ENCODE measurements at regions of chr2 and their contacts with region 1.

Region 1: DNA sequence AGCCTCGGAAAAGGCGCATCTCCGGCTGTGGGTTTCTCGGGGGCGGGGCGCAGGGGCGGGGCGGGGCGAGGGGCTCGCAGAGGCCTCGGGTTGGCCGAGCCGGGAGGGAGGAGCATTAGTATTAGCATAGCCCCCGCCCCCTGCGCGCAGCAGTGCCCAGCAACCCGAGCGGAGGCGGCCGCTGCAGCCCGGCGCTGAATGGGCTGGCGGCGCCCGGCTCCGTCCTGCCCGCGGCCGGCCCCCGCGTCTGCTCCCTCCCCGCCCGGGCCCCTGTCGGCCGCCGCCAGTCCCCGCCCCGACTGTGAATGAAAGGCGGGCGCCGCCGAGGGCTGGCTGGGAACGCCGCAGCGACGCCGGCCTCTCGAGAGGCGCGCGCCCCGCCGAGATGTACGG is at the start of gene EFR3B:
- DNase-seq: peak; percentile 92 to 97 (median 96)
- H3K4me3 ChIP-seq: peak within 1 kb of the TSS; percentile 70 to 98 (median 87)
- H3K27ac ChIP-seq: peak within 1 kb of the TSS; percentile 52 to 96 (median 91)
- H3K27me3 ChIP-seq: no peaks in the 10 kb centered on the region
- CTCF ChIP-seq: peak in 16 of 56 donors; percentile 1 to 45 (median 26)
- total RNA-seq, gene EFR3B: 44.3 to 131 (median 75.5) TPM

Region 2: GRCh38 chr2:24920098-24920808 is 121.7 kb before region 1 on chr2 and contains the start of gene ADCY3:
- intact Hi-C with region 1: loop called in 1 of 2 experiments (anchors 5 kb)
- DNase-seq: peak in 6 of 10 donors; percentile 56 to 81 (median 64)
- H3K4me3 ChIP-seq: peak within 1 kb of the TSS; percentile 57 to 86 (median 73)
- H3K27ac ChIP-seq: peak within 1 kb of the TSS in 56 of 59 donors; percentile 5 to 88 (median 74)
- H3K27me3 ChIP-seq: no peaks in the 10 kb centered on the region
- CTCF ChIP-seq: no peak
- total RNA-seq, gene ADCY3: 67.4 to 150 (median 95.0) TPM

Region 3: GRCh38 chr2:24984912-24985311 is 57.0 kb before region 1 on chr2:
- intact Hi-C with region 1: loop called (anchors 5 kb)
- DNase-seq: peak; percentile 43 to 81 (median 75)
- H3K4me3 ChIP-seq: peak overlapping the region in 11 of 59 donors; percentile 8 to 46 (median 22)
- H3K27ac ChIP-seq: peak overlapping the region in 53 of 59 donors; percentile 1 to 87 (median 66)
- H3K27me3 ChIP-seq: no peaks in the 10 kb centered on the region
- CTCF ChIP-seq: no peak

Region 4: DNA sequence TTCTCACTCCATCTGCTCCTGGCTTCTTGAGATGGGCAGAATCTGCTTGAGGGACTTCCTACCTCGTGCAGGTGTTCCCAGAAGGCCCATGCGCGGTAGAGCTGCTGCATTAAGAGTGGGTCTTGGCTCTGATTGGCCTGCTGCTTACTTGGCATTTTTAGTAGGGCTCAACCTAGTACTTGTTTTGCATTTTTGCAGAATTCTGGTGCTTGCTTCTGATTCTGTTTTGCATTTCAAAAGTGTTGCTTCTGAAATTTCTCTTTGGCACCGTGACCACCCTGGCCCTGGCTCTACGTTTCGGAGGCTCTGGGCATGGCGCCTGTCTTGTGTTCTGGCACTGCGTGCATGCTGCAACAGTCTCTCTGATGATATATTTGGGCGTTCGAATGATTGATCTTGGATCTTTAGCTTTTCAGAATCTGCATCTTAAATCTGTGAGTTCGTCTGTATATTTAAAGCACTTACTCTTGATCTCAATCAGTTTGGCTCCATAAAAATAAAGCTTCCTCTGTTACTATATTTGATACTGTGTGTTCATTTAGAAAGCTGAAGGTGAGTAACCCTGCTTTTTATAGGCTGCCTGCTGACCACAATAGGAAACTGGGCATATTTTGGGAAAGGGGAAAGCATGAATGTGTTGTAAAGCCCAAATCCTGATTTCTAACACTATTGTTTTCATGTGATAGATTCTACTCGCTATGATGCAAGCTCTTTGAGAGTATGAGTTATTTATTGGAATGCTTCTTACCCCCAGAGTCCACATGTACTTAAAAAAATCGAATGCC is 22.1 kb after region 1 on chr2:
- intact Hi-C with region 1: loop called (anchors 1 to 2 kb)
- DNase-seq: peak in 9 of 10 donors; percentile 49 to 81 (median 73)
- H3K4me3 ChIP-seq: peak overlapping the region in 33 of 59 donors; percentile 1 to 39 (median 21)
- H3K27ac ChIP-seq: peak overlapping the region; percentile 43 to 98 (median 93)
- H3K27me3 ChIP-seq: no peaks in the 10 kb centered on the region
- CTCF ChIP-seq: no peak

Region 5: GRCh38 chr2:25197336-25198208 is 155.6 kb after region 1 on chr2:
- intact Hi-C with region 1: loop called in 1 of 2 experiments (anchors 10 kb)
- DNase-seq: no peak
- H3K4me3 ChIP-seq: peak overlapping the region in 1 of 59 donors; percentile 6
- H3K27ac ChIP-seq: peak overlapping the region in 7 of 59 donors; percentile 0 to 71 (median 37)
- H3K27me3 ChIP-seq: no peaks in the 10 kb centered on the region
- CTCF ChIP-seq: no peak

Measured in dorsolateral prefrontal cortex (tissue), 120 donors.